ENCODE measurements at regions of chr2 and their contacts with region 1.

Region 1: GRCh38 chr2:109438773-109439389 is 174.9 kb downstream of the SEPTIN10 start:
- DNase-seq: peak; percentile 20
- H3K4me3 ChIP-seq: no peak overlapping the region
- H3K27ac ChIP-seq: no peak overlapping the region
- H3K4me1 ChIP-seq: peaks cover 4% of the 10 kb centered on the region
- H3K27me3 ChIP-seq: no peaks in the 10 kb centered on the region
- CTCF ChIP-seq: no peak

Region 2: DNA sequence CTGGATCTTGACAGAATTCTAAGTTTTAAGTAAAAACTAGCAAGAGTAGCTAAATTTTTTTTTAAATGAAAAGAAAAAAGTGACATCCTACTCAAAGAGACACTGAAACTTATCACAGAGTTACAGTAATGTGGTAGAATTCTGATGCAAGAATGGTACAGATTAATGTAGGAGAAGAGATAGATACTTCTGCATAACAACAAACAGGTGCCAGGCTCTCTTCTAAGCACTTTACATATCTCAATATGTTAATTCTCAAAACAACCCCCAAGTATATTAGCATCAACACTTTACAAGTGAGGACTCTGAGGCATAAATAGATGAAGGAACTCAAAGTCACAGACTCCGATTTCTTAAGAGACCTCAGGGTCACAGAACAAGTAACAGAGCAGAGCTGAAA is 961.8 kb before region 1 on chr2:
- CTCF ChIA-PET with region 1: no interaction called
- dilution Hi-C with region 1: no loop called
- in situ Hi-C with region 1: no loop called
- intact Hi-C with region 1: no loop called
- DNase-seq: no peak
- H3K4me3 ChIP-seq: no peak overlapping the region
- H3K27ac ChIP-seq: no peak overlapping the region
- H3K4me1 ChIP-seq: no peaks in the 10 kb centered on the region
- H3K27me3 ChIP-seq: no peaks in the 10 kb centered on the region
- CTCF ChIP-seq: no peak

Region 3: GRCh38 chr2:109374548-109375130 is 64.2 kb before region 1 on chr2:
- CTCF ChIA-PET with region 1: no interaction called
- dilution Hi-C with region 1: loop called (anchors 5 kb)
- in situ Hi-C with region 1: no loop called
- intact Hi-C with region 1: no loop called
- DNase-seq: no peak
- H3K4me3 ChIP-seq: no peak overlapping the region
- H3K27ac ChIP-seq: no peak overlapping the region
- H3K4me1 ChIP-seq: no peaks in the 10 kb centered on the region
- H3K27me3 ChIP-seq: no peaks in the 10 kb centered on the region
- CTCF ChIP-seq: no peak

Region 4: GRCh38 chr2:109582928-109583895 is 144.3 kb after region 1 on chr2:
- CTCF ChIA-PET with region 1: no interaction called
- dilution Hi-C with region 1: no loop called
- in situ Hi-C with region 1: no loop called
- intact Hi-C with region 1: no loop called
- DNase-seq: peak; percentile 55
- H3K4me3 ChIP-seq: no peak overlapping the region
- H3K27ac ChIP-seq: no peak overlapping the region
- H3K4me1 ChIP-seq: no peaks in the 10 kb centered on the region
- H3K27me3 ChIP-seq: no peaks in the 10 kb centered on the region
- CTCF ChIP-seq: no peak

Measured in mammary epithelial cell (primary cell).